HCT116 (cell line): ENCODE measurements at regions of chr6 and their contacts with region 1.

Region 1: GRCh38 chr6:111228094-111228493 is 140.8 kb downstream of the SLC16A10 start:
- DNase-seq: no peak
- ATAC-seq: peak; percentile 40
- H3K4me3 ChIP-seq: no peak overlapping the region
- H3K27ac ChIP-seq: no peak overlapping the region; the same call in 1 of the 2 replicates
- H3K4me1 ChIP-seq: peaks cover 11 to 18% of the 10 kb centered on the region in 2 experiments
- H3K27me3 ChIP-seq: no peaks in the 10 kb centered on the region
- CTCF ChIP-seq: no peak
- POLR2A ChIP-seq: no peak
- RAD21 ChIP-seq: no peak

Region 2: GRCh38 chr6:110512979-110513378 is 715.1 kb before region 1 on chr6:
- CTCF ChIA-PET with region 1: no interaction called
- POLR2A ChIA-PET with region 1: no interaction called
- RAD21 ChIA-PET with region 1: no interaction called
- intact Hi-C with region 1: loop called (anchors 10 kb)
- DNase-seq: no peak
- ATAC-seq: no peak
- H3K4me3 ChIP-seq: no peak overlapping the region
- H3K27ac ChIP-seq: no peak overlapping the region
- H3K4me1 ChIP-seq: peaks cover 21 to 29% of the 10 kb centered on the region in 2 experiments
- H3K27me3 ChIP-seq: no peaks in the 10 kb centered on the region
- CTCF ChIP-seq: no peak
- POLR2A ChIP-seq: no peak
- RAD21 ChIP-seq: no peak